Activated CD4-positive, alpha-beta T cell treated with anti-CD3 and anti-CD28 coated beads, Interleukin-2, amount 10 ng/mL, durations not matched to agents 24 days and 14 days (primary cell): ENCODE measurements at regions of chr4 and their contacts with region 1.

Region 1: DNA sequence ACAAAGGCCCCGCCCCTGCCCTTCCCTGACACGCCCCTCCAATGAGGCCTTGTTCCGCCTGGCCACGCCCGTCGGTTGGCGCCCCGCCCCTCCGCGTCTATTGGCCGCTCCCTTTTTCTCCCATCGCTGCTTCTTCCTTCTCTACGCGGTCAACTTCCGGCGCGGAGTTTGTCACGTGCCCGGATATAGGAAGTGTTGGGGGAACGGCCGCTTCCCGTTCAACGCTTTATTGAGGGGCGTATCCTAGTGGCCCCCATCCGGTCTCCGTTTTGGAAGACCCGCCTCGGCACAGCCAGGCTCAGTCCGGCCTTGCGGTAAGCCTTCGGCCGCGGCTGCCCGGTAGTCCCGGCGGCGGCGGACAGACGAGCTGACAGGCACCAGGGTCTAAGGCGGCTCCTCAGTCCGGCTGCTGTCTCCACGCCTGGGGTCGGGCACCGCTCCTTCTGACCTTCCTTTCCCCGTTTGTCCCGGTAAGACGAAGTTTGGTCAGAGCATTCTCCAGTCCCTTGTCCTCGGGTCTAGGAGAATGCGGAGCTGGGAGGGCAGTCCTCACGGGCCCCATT is at the start of gene EXOC1:
- DNase-seq: peak; percentile 99
- H3K4me3 Mint-ChIP-seq: peak within 1 kb of the TSS; percentile 38
- H3K27ac Mint-ChIP-seq: peak within 1 kb of the TSS; percentile 90
- H3K4me1 Mint-ChIP-seq: peaks cover 20% of the 10 kb centered on the region
- H3K27me3 Mint-ChIP-seq: no peaks in the 10 kb centered on the region
- total RNA-seq, gene EXOC1: 20.8 and 21.5 TPM in 2 replicates

Region 2: DNA sequence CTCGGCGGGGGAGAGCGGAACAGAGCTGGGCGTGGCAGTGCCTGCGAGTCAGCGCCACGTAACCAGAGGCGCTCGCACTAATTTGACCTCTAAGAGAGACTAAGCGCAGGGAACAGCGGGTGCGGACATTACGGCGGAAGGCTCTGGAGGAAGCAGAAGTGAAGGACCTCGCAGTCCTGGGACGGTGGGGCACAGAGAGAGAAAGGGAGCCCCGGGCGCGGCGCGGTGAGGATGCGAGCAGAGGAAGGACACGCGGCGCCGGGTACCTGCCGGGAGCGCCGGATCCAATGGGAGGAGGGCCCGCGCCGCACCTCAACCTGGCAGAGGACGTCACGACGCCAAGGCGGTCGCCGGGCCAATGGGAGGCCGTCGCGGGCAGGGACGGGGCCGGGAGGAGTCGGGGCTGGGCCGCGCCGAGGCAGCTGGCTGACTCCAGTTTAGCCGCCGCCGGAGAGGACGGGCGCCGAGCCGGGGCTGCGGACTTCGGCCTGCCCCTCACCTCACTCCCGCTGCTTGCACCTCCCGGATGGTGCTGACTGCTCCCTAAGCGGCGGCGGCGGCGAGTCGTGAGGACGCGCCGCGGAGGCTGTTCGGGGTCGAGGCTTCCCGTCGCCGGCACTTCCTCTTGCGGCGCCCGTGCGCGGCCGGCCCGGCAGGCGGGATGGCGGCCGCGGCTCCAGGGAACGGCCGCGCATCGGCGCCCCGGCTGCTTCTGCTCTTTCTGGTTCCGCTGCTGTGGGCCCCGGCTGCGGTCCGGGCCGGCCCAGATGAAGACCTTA is 457.8 kb before region 1 on chr4 and contains the start of gene TMEM165:
- intact Hi-C with region 1: loop called (anchors 1 kb)
- DNase-seq: peak; percentile 97
- H3K4me3 Mint-ChIP-seq: peak within 1 kb of the TSS; percentile 100
- H3K27ac Mint-ChIP-seq: peak within 1 kb of the TSS; percentile 97
- H3K4me1 Mint-ChIP-seq: peaks cover 33% of the 10 kb centered on the region
- H3K27me3 Mint-ChIP-seq: no peaks in the 10 kb centered on the region
- total RNA-seq, gene TMEM165: 87.2 and 99.1 TPM in 2 replicates

Region 3: GRCh38 chr4:55754754-55755350 is 98.7 kb before region 1 on chr4:
- intact Hi-C with region 1: loop called (anchors 10 kb)
- DNase-seq: no peak
- H3K4me3 Mint-ChIP-seq: no peak overlapping the region
- H3K27ac Mint-ChIP-seq: no peak overlapping the region
- H3K4me1 Mint-ChIP-seq: no peaks in the 10 kb centered on the region
- H3K27me3 Mint-ChIP-seq: no peaks in the 10 kb centered on the region

Region 4: DNA sequence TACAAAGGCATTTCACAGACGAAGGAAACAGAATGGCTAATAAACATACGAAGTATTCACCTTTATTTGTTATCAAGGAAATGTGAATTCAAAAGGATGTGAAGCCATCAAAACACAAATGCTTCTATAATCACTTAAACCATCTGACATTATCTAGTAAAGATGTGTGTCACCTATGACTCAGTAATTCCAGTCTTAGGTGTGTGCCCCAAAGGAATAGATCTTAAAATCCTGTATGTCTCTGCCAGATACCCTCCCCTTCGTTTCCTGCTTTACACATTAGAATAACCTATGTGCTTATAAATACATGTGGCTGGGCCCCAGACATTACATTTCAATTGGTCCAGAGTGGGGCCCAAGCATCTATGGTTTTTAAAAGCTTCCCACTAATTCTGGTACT is 53.4 kb after region 1 on chr4:
- intact Hi-C with region 1: loop called (anchors 5 kb)
- DNase-seq: no peak
- H3K4me3 Mint-ChIP-seq: no peak overlapping the region
- H3K27ac Mint-ChIP-seq: peak overlapping the region; percentile 72
- H3K4me1 Mint-ChIP-seq: peaks cover 11% of the 10 kb centered on the region
- H3K27me3 Mint-ChIP-seq: no peaks in the 10 kb centered on the region

Region 5: DNA sequence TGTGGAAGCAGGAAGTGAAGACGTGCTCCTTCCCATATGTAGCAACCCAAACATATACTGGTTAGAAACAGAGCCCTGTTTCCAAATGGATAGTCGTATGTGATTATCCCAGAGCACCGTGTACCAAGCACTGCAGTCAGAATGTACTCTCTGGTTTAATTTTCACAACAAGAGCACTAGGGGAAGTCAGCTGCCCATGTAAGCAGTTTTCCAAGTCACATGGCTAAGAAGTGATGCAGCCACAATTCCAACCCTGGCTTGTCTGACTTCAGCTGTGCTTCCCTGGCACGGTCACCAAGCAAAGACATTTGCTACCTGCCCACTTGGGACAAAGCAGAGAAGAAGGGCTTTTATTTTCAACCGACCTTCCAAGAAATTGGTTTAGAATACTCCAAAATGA is 67.0 kb after region 1 on chr4:
- intact Hi-C with region 1: no loop called
- DNase-seq: no peak
- H3K4me3 Mint-ChIP-seq: no peak overlapping the region
- H3K27ac Mint-ChIP-seq: no peak overlapping the region
- H3K4me1 Mint-ChIP-seq: no peaks in the 10 kb centered on the region
- H3K27me3 Mint-ChIP-seq: no peaks in the 10 kb centered on the region

Region 6: DNA sequence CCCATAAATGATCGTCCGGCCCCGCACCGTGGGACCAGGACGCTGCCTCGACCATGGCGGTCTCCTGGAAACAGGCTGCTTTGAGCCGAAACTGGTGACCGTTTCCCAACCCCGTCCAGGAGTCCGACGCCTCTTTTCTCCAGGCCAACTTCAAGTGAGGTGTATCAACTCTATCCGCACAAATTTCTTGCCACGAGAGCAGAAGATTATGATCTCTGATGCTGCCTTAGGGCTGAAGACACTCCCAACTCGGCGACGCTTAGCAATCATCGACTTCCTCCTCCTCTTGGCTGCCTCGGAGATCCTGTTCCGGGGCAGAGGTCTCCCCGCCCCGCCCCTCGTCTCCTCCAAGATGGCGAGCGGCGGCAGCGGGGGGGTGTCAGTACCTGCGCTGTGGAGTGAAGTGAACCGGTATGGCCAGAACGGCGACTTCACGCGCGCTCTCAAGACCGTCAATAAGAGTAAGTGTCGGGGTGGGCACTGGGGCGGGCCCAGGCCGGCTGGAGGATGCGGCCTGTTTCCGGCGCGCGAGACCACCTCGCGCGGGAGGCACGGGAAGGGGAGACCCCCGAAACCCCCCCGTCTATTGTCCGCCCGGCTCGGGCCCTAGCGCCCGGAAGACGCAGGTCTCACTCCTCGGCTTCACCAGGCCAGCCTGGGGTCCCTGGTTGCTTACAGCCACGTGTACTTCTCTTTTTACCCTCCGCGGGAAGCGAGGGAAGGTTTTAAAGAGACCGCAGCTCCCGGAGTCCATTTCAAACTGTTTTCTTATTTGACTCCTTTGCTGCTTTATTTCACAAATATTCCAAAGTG is 613.9 kb after region 1 on chr4 and contains the start of gene SRP72:
- intact Hi-C with region 1: loop called (anchors 2 kb)
- DNase-seq: peak; percentile 97
- H3K4me3 Mint-ChIP-seq: peak within 1 kb of the TSS; percentile 94
- H3K27ac Mint-ChIP-seq: peak within 1 kb of the TSS; percentile 95
- H3K4me1 Mint-ChIP-seq: peaks cover 45% of the 10 kb centered on the region
- H3K27me3 Mint-ChIP-seq: no peaks in the 10 kb centered on the region
- total RNA-seq, gene SRP72: 202 and 209 TPM in 2 replicates